HEK293T (cell line): ENCODE measurements at regions of chr11 and their contacts with region 1.

Region 1: GRCh38 chr11:67401495-67402191 is at the start of gene PPP1CA:
- DNase-seq: peak; percentile 99

Region 2: DNA sequence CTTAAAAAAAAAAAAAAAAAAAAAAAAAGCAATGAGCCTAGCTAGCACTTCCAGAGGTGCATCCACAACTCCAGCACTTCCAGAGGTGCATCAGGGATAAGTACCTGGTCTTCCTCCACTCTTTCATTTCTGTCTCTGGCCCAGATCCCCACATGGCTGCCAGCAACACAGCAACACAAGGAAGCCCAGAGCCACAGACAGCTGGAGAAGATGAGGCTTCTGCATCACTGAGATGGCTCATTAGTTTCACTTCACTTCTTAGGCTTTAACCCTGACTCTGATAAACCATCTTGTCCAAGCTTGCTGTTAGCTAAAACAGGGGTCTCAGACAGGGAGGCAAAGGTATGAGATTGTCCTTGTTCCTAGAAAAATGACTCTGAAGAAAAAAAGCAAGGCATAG is 479.1 kb before region 1 on chr11:
- CTCF ChIA-PET with region 1: no interaction called
- POLR2A ChIA-PET with region 1: no interaction called
- DNase-seq: no peak

Region 3: GRCh38 chr11:67391304-67392132 is 10.1 kb before region 1 on chr11 and contains the start of gene RAD9A:
- CTCF ChIA-PET with region 1: interaction called, 4 read pairs
- POLR2A ChIA-PET with region 1: interaction called, 50 read pairs
- DNase-seq: peak; percentile 97

Region 4: GRCh38 chr11:67411785-67412152 is 10.1 kb after region 1 on chr11:
- CTCF ChIA-PET with region 1: interaction called, 4 read pairs
- POLR2A ChIA-PET with region 1: interaction called, 25 read pairs
- DNase-seq: no peak

Region 5: DNA sequence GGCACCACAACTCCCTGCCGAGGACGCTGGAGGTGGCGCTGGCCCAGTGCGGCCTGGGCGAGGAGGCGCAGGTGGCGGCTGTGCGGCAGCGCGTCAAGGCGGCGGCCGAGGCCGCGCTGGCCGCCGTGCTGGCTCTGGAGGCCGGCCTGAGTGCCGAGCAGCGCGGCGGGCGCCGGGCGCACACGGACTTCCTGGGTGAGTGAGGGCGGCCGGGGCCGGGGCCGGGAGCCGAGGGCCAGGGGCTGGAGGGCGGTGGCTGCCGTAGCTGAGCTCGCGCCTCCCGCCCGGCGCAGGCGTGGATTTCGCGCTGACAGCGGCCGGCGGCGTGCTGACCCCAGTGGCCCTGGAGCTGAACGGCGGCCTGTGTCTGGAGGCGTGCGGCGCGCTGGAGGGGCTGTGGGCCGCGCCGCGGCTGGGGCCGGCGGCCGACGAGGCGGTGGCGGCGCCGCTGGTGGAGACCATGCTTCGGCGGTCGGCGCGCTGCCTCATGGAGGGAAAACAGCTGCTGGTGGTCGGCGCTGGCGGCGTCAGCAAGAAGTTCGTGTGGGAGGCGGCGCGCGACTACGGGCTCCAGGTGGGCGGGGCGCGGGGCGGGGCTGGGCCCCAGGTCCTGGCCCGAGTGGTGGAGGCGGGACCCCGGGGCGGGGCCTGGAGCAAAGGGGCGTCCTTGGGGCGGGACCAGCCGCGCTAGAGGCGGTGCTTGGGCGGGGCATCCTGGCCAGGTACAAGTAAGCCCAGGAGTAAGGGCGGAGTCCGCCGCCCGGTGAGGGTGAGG is 19.2 kb after region 1 on chr11:
- CTCF ChIA-PET with region 1: no interaction called
- POLR2A ChIA-PET with region 1: interaction called, 42 read pairs
- DNase-seq: peak; percentile 99

Region 6: DNA sequence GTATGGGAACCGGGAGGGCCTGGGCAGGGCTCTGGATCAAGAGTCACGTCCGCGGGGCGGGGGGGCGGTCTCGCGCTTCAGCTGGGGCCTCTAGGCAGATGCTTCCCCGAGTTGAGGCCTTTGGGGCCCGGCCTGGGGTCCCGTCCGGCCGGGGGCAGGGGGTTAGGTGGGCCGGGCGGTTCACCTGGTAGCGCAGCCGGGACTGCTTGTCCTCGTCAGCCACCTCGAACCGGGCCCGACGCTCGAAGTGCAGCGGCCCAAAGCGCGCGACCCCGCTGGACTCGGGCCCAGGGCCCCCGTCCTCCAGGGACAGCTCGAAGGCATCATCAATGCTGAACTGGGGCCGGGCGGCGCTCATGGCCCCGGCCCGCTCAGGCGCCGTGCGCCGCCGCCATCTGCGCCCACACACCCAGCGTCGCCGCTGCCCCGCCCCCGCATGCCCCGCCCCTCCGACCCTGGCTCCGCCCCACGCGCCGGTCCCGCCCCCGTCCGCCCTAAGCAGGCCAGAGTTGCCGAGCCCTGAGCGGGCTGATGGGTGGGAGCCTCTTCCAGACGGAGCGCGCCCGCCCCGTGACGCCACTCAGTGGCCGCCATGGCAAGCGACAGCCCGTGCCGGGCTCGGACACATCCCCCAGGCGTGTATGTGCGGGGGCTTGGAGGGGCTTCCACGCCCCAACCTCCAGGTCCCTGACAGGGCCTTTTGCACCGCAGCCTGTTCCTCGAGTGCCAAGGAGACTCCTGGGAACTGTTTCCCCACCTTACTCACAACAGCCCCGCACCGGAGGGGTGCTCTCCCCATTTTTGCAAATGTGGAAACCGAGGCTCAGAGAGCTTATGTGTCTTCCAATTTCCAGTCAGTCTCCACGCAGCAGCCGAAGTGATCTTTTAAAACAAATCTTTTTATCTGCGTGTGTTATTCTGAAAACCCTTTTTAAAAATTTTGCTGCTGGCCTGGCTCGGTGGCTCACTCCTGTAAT is 67.5 kb after region 1 on chr11 and contains the start of gene TMEM134:
- CTCF ChIA-PET with region 1: interaction called, 3 read pairs
- POLR2A ChIA-PET with region 1: interaction called, 34 read pairs
- DNase-seq: peak; percentile 97